MCF 10A (cell line): ENCODE measurements at regions of chr2 and their contacts with region 1.

Region 1: DNA sequence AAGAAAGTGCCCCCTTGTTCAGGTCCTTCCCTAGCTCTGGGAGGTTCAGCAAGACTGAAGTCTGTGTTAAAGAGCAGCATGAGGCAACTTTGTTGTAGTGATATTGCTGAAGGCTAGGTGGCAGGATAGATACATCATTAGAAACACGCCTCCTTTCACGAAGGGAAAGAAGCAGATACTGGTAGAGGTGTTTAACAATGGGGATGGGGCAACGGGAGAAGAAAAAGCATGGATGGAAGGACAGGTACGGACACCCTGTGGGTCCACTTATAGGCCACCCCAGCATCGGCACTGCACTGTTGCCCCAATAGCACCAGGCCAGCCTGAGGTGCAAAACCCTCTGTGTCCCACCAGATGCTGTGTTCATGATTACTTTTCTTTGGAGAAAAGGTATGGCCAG is 3.5 kb upstream of the IGFBP5 start:
- DNase-seq: peak; percentile 68
- H3K4me3 Mint-ChIP-seq: no peak overlapping the region
- H3K27ac Mint-ChIP-seq: no peak overlapping the region
- H3K4me1 Mint-ChIP-seq: peaks cover 15% of the 10 kb centered on the region
- H3K27me3 Mint-ChIP-seq: no peaks in the 10 kb centered on the region
- CTCF ChIP-seq: peak; percentile 53

Region 2: DNA sequence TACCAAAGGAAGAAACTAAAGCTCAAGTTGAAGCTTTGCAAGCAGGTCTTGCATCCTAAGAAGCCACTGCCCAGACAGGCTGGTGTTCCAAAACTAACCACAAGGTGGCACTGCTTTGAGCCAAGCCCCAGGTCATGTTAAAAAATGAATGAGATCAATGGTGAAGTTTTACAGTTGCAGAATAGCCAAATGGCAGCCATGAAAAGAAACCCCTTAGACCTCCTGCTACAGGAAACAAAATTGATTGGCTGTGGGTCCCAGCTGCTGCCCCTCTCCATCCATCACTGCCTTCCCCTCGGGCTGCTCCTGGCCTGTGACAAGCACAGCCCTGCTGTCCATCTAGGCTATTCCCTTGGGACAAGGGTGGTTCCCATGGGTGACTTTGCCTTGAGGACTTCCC is 664.8 kb before region 1 on chr2:
- CTCF ChIA-PET with region 1: no interaction called
- POLR2A ChIA-PET with region 1: no interaction called
- intact Hi-C with region 1: no loop called
- DNase-seq: peak; percentile 64
- H3K4me3 Mint-ChIP-seq: no peak overlapping the region
- H3K27ac Mint-ChIP-seq: no peak overlapping the region
- H3K4me1 Mint-ChIP-seq: peaks cover 15% of the 10 kb centered on the region
- H3K27me3 Mint-ChIP-seq: no peaks in the 10 kb centered on the region
- CTCF ChIP-seq: peak; percentile 74

Region 3: GRCh38 chr2:216478151-216478550 is 220.7 kb before region 1 on chr2:
- CTCF ChIA-PET with region 1: no interaction called
- POLR2A ChIA-PET with region 1: no interaction called
- intact Hi-C with region 1: no loop called
- DNase-seq: peak; percentile 92
- H3K4me3 Mint-ChIP-seq: no peak overlapping the region
- H3K27ac Mint-ChIP-seq: no peak overlapping the region
- H3K4me1 Mint-ChIP-seq: peaks cover 9% of the 10 kb centered on the region
- H3K27me3 Mint-ChIP-seq: no peaks in the 10 kb centered on the region
- CTCF ChIP-seq: no peak

Region 4: GRCh38 chr2:216683846-216684507 is 14.9 kb before region 1 on chr2:
- CTCF ChIA-PET with region 1: interaction called, 23 read pairs
- POLR2A ChIA-PET with region 1: interaction called, 4 read pairs
- intact Hi-C with region 1: no loop called
- DNase-seq: peak; percentile 99
- H3K4me3 Mint-ChIP-seq: no peak overlapping the region
- H3K27ac Mint-ChIP-seq: peak overlapping the region; percentile 93
- H3K4me1 Mint-ChIP-seq: peaks cover 32% of the 10 kb centered on the region
- H3K27me3 Mint-ChIP-seq: no peaks in the 10 kb centered on the region
- CTCF ChIP-seq: no peak

Region 5: DNA sequence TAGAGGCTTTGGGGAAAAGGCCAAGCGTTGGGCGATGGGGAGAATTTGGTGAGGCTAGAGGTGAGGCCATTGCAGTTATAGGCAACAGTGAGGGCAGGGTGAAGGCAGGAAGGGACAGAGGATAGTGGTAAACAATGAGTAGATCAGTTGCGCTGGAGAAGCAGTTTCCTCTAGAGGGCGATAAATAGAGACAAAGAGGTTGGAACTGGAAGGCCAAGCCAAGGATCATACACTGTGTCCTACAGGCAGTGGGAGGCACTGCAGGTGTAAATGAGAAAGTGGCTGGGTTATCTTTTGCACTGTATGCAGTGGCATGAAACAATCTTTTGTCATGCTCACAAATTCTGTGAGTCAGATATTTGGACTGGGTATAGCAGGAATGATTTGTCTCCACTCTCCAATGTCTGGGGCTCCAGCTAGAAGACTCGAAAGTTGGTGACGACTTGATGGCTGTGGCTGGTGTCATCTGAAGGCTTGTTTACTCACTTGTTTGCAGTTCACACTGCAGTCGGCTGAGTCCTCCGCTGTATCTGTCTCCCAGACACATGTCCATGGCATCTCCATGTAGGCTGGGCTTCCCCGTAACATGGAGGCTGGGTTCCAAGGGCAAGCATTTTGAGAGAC is 78.9 kb after region 1 on chr2:
- CTCF ChIA-PET with region 1: interaction called, 11 read pairs
- POLR2A ChIA-PET with region 1: no interaction called
- intact Hi-C with region 1: loop called (anchors 5 kb)
- DNase-seq: peak; percentile 88
- H3K4me3 Mint-ChIP-seq: no peak overlapping the region
- H3K27ac Mint-ChIP-seq: no peak overlapping the region
- H3K4me1 Mint-ChIP-seq: peaks cover 12% of the 10 kb centered on the region
- H3K27me3 Mint-ChIP-seq: no peaks in the 10 kb centered on the region
- CTCF ChIP-seq: peak; percentile 82

Region 6: GRCh38 chr2:217166241-217166850 is 467.5 kb after region 1 on chr2:
- CTCF ChIA-PET with region 1: interaction called, 59 read pairs
- POLR2A ChIA-PET with region 1: interaction called, 3 read pairs
- intact Hi-C with region 1: loop called (anchors 1 kb)
- DNase-seq: peak; percentile 54
- H3K4me3 Mint-ChIP-seq: no peak overlapping the region
- H3K27ac Mint-ChIP-seq: no peak overlapping the region
- H3K4me1 Mint-ChIP-seq: peaks cover 6% of the 10 kb centered on the region
- H3K27me3 Mint-ChIP-seq: no peaks in the 10 kb centered on the region
- CTCF ChIP-seq: peak; percentile 65

Region 7: DNA sequence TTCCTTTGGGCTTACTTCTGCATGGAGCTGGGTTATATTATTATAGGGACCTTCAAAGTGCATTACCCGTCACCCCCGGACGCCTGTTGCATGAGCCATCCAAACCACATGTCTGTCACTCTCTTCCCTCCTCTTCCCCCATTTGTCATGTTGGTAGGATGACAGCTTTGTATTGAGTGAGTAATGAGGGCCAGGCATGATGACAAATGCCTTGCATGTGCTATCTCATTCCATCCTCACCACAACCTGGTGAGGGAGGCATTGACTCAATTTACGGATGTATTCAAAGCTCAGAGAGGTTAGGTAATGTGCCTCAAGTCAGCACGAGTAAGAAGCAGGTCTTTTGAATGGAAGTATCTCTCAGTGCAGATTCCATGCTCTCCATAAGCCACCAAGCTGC is 671.5 kb after region 1 on chr2:
- CTCF ChIA-PET with region 1: interaction called, 4 read pairs
- POLR2A ChIA-PET with region 1: no interaction called
- intact Hi-C with region 1: loop called (anchors 2 kb)
- DNase-seq: peak; percentile 75
- H3K4me3 Mint-ChIP-seq: no peak overlapping the region
- H3K27ac Mint-ChIP-seq: no peak overlapping the region
- H3K4me1 Mint-ChIP-seq: peaks cover 12% of the 10 kb centered on the region
- H3K27me3 Mint-ChIP-seq: no peaks in the 10 kb centered on the region
- CTCF ChIP-seq: no peak